Calu3 (cell line): ENCODE measurements at regions of chr14 and their contacts with region 1.

Region 1: DNA sequence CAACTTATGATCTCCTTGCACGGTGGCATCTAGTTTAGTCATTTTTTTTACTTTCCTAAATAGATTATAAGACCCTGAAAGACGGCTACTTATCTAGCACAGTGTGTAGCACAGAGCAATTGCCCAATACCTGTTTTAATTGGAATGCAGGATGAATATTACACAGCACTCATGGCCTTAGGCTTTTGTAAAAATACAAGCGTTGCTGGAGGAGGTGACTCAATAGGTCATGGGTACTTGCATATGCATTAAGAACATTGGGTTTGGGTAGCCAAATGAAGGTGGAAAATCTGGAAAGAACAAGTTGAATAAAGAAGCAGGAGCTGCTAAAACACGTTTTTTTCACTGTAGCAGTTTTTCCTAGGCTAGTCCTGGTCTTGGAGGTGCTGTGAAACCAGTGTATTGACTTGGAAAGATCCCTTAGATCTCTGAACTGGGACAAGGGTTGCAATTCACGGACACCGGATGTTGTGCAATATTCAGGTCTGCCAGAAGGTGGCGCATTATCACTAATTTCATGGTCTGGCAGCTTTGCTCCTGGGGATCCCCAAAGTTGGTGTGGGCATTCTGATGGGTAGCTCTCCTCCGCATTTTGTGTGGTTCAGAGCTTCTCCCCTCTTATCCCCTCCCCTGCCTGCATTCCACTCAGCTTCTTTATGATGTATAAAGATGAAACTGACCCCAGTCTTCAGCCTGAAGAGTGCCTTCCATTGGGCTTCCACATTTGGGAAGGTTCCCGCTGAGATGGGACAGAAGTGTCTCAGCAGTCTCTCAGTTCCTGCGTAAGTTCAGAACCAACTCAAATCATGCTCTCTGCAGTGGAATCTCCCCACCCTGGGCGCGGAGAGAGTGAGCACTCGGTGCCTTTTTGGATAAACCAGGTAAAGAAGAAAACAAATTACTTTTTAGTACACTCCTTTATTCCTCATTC is 278.3 kb downstream of the NRXN3 start:
- DNase-seq: peak; percentile 68
- H3K4me3 Mint-ChIP-seq: no peak overlapping the region
- H3K27ac Mint-ChIP-seq: no peak overlapping the region
- H3K4me1 Mint-ChIP-seq: no peaks in the 10 kb centered on the region
- H3K27me3 Mint-ChIP-seq: peaks cover 25% of the 10 kb centered on the region
- CTCF ChIP-seq: peak; percentile 57

Region 2: GRCh38 chr14:78566026-78566858 is 117.8 kb after region 1 on chr14:
- CTCF ChIA-PET with region 1: interaction called, 4 read pairs
- intact Hi-C with region 1: loop called (anchors 5 kb)
- DNase-seq: peak; percentile 80
- H3K4me3 Mint-ChIP-seq: no peak overlapping the region
- H3K27ac Mint-ChIP-seq: no peak overlapping the region
- H3K4me1 Mint-ChIP-seq: no peaks in the 10 kb centered on the region
- H3K27me3 Mint-ChIP-seq: peaks cover 33% of the 10 kb centered on the region
- CTCF ChIP-seq: peak; percentile 57

Region 3: DNA sequence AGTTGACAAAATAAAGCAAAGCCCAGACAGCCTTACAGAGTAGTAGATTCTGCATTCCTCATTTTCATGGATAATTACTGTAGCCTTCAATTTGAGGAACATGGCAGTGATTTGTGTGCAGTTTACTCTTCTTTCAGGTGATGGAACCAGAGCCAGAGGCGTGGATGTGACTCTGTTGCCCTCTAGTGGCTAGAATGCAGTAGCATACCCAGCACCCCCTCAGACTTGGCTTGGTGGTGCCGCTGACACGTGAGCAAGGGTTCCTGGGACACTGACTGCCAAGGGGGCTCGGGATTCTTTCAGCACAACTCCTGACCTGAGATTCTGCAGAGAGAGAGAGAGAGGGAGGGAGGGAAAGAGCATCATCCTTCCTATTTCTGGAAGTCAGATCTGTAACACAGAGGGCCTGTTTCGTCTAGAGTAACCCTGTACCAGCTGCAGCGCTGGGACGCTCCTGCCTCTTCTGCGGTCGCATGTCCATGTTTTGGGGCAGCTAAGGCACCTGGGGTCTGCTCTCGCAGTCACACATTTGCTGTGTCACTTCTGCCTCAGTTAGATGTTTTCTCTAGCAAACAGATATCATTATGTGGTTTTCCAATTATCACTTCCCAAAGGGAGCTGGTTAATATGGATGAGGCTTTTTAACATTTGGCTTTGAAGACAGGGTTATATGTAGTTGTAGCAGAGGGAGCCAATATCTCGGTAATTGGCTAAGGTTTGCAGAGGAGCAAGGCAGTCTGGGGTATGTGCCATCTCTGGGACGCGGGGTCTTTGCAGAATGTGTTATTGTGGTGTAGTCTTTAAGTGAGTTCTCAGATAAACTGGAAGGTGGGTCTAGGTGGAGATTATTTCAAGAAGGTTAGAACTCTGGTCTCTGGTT is 149.9 kb after region 1 on chr14:
- CTCF ChIA-PET with region 1: no interaction called
- intact Hi-C with region 1: loop called (anchors 2 kb)
- DNase-seq: peak; percentile 61
- H3K4me3 Mint-ChIP-seq: peak overlapping the region; percentile 8
- H3K27ac Mint-ChIP-seq: no peak overlapping the region
- H3K4me1 Mint-ChIP-seq: no peaks in the 10 kb centered on the region
- H3K27me3 Mint-ChIP-seq: peaks cover 75% of the 10 kb centered on the region
- CTCF ChIP-seq: peak; percentile 86

Region 4: DNA sequence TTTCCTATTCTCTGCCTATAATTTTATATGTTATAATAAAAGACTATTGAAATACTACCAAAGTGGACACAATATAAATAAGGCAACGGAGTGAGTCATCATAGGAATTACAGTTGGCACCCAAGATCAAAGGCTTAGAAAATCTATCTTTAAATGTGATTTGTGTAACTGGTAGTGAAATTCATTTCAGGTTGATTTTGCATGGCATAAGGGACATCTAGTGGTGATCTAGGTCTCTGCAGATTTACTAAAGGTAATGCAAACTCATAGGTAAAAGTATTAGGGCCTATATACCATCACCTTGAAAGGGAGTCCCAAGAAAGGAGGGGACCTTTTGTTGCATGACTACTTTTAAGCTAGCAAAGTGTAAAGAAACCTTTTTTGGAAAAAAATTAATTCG is 248.9 kb after region 1 on chr14:
- CTCF ChIA-PET with region 1: no interaction called
- intact Hi-C with region 1: loop called (anchors 1 kb)
- DNase-seq: no peak
- H3K4me3 Mint-ChIP-seq: no peak overlapping the region
- H3K27ac Mint-ChIP-seq: no peak overlapping the region
- H3K4me1 Mint-ChIP-seq: no peaks in the 10 kb centered on the region
- H3K27me3 Mint-ChIP-seq: peaks cover 25% of the 10 kb centered on the region
- CTCF ChIP-seq: no peak